T-cell (primary cell): ENCODE measurements at regions of chr1 and their contacts with region 1.

Region 1: DNA sequence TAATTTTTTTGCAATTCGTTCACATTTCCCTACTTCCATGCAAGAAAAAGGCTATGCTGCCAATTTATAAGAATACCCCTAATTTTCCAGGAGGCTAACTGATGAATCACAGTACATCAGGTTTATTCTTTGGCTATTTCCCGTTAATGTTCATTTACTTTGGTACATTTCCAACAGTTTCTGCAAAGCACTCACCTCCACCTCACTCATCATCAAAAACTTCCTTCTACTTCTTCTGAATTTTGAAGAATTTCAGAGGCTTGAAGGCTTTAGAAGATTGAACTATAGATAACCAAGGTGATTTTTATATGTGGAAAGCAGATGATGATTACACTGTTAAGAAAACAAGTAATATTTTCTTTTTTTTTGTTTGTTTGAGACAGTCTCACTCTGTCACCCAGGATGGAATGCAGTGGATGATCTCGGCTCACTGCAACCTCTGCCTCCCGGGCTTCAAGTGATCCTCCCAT is 60.5 kb upstream of the HP1BP3 start:
- DNase-seq: no peak
- ATAC-seq: no peak
- H3K4me3 ChIP-seq: no peak overlapping the region
- H3K4me3 Mint-ChIP-seq: no peak overlapping the region
- H3K27ac ChIP-seq: no peak overlapping the region
- H3K27ac Mint-ChIP-seq: no peak overlapping the region
- H3K4me1 ChIP-seq: no peaks in the 10 kb centered on the region
- H3K4me1 Mint-ChIP-seq: no peaks in the 10 kb centered on the region
- H3K27me3 ChIP-seq: no peaks in the 10 kb centered on the region
- H3K27me3 Mint-ChIP-seq: no peaks in the 10 kb centered on the region

Region 2: DNA sequence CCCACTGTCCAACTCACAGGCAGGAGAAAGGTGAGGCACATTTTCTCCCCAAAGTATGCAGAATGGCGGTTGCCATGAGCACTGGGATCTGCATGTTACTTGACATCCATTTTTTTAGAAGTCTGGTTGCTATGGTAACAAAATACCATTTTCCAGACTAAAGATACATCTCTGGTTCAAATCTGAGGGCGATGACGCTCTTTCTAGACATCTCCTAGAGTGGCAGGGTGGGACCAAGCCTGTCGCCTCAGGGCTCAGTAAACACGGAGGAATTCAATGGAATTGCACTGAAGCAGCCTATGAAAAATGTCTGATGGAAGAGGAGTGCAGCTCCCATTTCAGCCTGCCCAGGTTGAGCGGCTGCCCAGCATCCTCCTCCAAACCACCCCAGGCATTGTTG is 316.7 kb before region 1 on chr1:
- CTCF ChIA-PET with region 1: no interaction called
- POLR2A ChIA-PET with region 1: no interaction called
- DNase-seq: no peak
- ATAC-seq: no peak
- H3K4me3 ChIP-seq: no peak overlapping the region
- H3K4me3 Mint-ChIP-seq: no peak overlapping the region
- H3K27ac ChIP-seq: no peak overlapping the region
- H3K27ac Mint-ChIP-seq: no peak overlapping the region
- H3K4me1 ChIP-seq: no peaks in the 10 kb centered on the region
- H3K4me1 Mint-ChIP-seq: no peaks in the 10 kb centered on the region
- H3K27me3 ChIP-seq: peaks cover 3 to 40% of the 10 kb centered on the region in 2 experiments
- H3K27me3 Mint-ChIP-seq: peaks cover 65 to 69% of the 10 kb centered on the region in 2 donors

Region 3: GRCh38 chr1:20763417-20763816 is 84.2 kb before region 1 on chr1:
- CTCF ChIA-PET with region 1: no interaction called
- POLR2A ChIA-PET with region 1: no interaction called
- DNase-seq: no peak
- ATAC-seq: no peak
- H3K4me3 ChIP-seq: no peak overlapping the region
- H3K4me3 Mint-ChIP-seq: no peak overlapping the region
- H3K27ac ChIP-seq: no peak overlapping the region
- H3K27ac Mint-ChIP-seq: no peak overlapping the region
- H3K4me1 ChIP-seq: no peaks in the 10 kb centered on the region
- H3K4me1 Mint-ChIP-seq: peaks cover 0 to 5% (median 0%) of the 10 kb centered on the region in 3 donors
- H3K27me3 ChIP-seq: no peaks in the 10 kb centered on the region
- H3K27me3 Mint-ChIP-seq: no peaks in the 10 kb centered on the region

Region 4: GRCh38 chr1:20792196-20792595 is 55.5 kb before region 1 on chr1:
- CTCF ChIA-PET with region 1: no interaction called
- POLR2A ChIA-PET with region 1: no interaction called
- DNase-seq: no peak
- ATAC-seq: no peak
- H3K4me3 ChIP-seq: no peak overlapping the region
- H3K4me3 Mint-ChIP-seq: no peak overlapping the region
- H3K27ac ChIP-seq: no peak overlapping the region
- H3K27ac Mint-ChIP-seq: no peak overlapping the region
- H3K4me1 ChIP-seq: peaks cover 6 to 7% of the 10 kb centered on the region in 2 experiments
- H3K4me1 Mint-ChIP-seq: peaks cover 8 to 10% (median 10%) of the 10 kb centered on the region in 3 donors
- H3K27me3 ChIP-seq: peaks cover 0 to 2% of the 10 kb centered on the region in 2 experiments
- H3K27me3 Mint-ChIP-seq: no peaks in the 10 kb centered on the region

Region 5: GRCh38 chr1:20821466-20821865 is 26.2 kb before region 1 on chr1:
- CTCF ChIA-PET with region 1: no interaction called
- POLR2A ChIA-PET with region 1: interaction called in 1 of 2 experiments, 12 read pairs
- DNase-seq: no peak
- ATAC-seq: no peak
- H3K4me3 ChIP-seq: no peak overlapping the region
- H3K4me3 Mint-ChIP-seq: no peak overlapping the region
- H3K27ac ChIP-seq: no peak overlapping the region
- H3K27ac Mint-ChIP-seq: no peak overlapping the region
- H3K4me1 ChIP-seq: no peaks in the 10 kb centered on the region
- H3K4me1 Mint-ChIP-seq: no peaks in the 10 kb centered on the region
- H3K27me3 ChIP-seq: no peaks in the 10 kb centered on the region
- H3K27me3 Mint-ChIP-seq: no peaks in the 10 kb centered on the region